ENCODE measurements at regions of chr4 and their contacts with region 1.

Region 1: DNA sequence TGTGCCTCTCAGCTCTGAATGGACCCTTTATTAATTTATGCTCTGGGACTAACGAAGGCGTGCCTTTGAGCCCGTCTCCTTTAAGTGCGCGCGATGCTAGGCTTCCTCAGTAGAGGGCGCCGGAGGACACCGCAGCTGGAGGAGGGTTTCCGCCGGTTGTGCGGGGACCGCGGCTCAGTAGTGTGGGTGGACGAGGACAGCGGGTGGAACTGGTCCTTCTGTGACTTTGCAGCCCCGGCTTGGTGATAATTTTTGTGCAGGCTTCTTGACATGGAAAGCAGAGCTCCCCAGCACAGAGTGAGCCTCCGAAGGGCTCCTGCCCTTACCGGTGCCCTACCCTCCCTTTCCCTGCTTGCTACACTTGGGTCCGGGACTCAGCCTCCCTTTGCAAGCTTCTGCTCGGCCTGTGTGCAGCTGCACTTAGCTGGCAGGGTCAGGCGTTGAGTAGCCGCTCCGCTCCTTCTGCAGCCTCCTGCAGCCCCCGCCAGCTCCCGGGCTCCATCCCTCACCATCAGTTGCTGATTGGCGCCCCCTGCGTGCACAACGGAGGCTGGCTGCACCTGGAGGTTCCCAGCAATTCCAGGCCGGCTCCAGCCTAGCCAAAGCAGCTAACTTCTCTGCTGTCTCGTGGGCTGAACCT is 26.8 kb upstream of the BOD1L1 start:
- DNase-seq: peak; percentile 82
- H3K4me3 ChIP-seq: peak overlapping the region; percentile 19 to 77 (median 30)
- H3K27ac ChIP-seq: peak overlapping the region in 1 of 4 donors; percentile 52
- H3K4me1 ChIP-seq: peaks cover 0 to 17% (median 2%) of the 10 kb centered on the region in 4 donors
- H3K27me3 ChIP-seq: no peaks in the 10 kb centered on the region
- CTCF ChIP-seq: peak; percentile 60 to 85 (median 81)
- EP300 ChIP-seq: no peak
- POLR2A ChIP-seq: no peak

Region 2: DNA sequence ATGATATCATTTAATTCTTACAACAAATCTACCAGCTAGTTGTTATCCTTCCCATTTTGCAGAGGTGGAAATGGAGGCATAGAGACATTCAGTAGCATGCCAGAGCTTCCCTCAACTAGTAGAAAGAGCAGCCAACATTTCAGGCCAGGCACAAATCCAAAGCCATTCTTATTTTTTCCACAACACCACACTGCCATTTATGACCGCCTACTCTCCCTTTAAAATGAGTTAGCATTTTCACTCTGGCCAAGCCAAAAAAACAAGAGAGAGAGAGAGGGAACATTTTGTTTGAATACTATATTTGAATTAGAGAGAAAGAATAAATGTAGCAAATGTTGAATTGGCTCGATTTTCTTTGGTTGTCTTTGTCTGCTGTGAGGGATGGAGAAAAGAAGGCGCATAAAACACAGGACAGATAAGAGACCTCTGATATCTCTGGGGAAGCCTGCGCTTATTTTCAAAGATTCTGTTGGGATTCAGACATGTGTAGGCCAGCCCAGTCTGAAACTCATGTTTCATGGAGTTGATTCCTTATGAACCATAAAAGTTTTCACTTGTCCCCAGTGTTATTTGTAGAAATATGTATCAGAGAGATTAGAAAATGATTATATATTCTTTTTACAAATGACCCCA is 435.8 kb before region 1 on chr4:
- in situ Hi-C with region 1: no loop called
- intact Hi-C with region 1: no loop called
- DNase-seq: no peak
- H3K4me3 ChIP-seq: no peak overlapping the region
- H3K27ac ChIP-seq: peak overlapping the region in 3 of 4 donors; percentile 19 to 54 (median 49)
- H3K4me1 ChIP-seq: no peaks in the 10 kb centered on the region
- H3K27me3 ChIP-seq: no peaks in the 10 kb centered on the region
- CTCF ChIP-seq: no peak
- EP300 ChIP-seq: no peak
- POLR2A ChIP-seq: no peak

Region 3: GRCh38 chr4:14787894-14788293 is 1133.6 kb after region 1 on chr4:
- in situ Hi-C with region 1: loop called in 3 of 4 experiments (anchors 25 kb)
- intact Hi-C with region 1: no loop called
- DNase-seq: peak; percentile 14
- H3K4me3 ChIP-seq: no peak overlapping the region
- H3K27ac ChIP-seq: no peak overlapping the region
- H3K4me1 ChIP-seq: no peaks in the 10 kb centered on the region
- H3K27me3 ChIP-seq: no peaks in the 10 kb centered on the region
- CTCF ChIP-seq: peak in 4 of 5 experiments; percentile 35 to 46 (median 40)
- EP300 ChIP-seq: no peak
- POLR2A ChIP-seq: no peak

Region 4: DNA sequence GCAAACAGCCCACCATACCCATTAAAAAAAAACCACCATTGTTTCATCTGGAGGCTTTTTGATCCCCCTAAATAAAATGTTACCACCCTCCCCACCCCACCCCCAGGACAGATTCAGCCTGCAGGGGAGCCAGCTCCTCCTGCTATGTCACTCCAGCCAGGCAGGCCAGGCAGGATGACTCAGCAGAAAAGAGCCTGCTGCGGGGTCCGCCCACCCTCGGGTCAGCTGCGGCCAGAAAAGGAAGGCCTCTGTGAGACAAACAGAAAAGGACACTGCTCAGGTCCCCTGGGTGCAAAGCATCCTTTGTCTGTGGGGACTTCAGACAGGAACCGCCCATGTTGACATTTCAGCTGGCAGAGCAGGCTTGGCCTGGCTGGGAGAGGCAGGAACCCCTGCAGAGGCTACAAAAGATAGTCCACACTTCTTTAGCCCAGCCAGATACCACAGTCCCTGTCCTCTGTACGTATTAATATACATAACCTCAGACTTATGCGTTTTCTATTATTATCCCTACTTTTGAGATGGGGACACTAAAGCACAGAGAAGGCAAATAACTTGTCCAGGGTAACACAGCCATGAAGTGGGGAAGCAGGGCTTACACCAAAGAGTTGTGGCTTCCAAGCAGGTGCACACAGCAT is 1495.7 kb after region 1 on chr4:
- in situ Hi-C with region 1: loop called in 1 of 4 experiments (anchors 25 kb)
- intact Hi-C with region 1: no loop called
- DNase-seq: peak; percentile 46
- H3K4me3 ChIP-seq: no peak overlapping the region
- H3K27ac ChIP-seq: peak overlapping the region in 1 of 4 donors; percentile 39
- H3K4me1 ChIP-seq: peaks cover 3 to 12% (median 10%) of the 10 kb centered on the region in 4 donors
- H3K27me3 ChIP-seq: no peaks in the 10 kb centered on the region
- CTCF ChIP-seq: no peak
- EP300 ChIP-seq: no peak
- POLR2A ChIP-seq: no peak

Measured in transverse colon (tissue), 4 donors.